Transverse colon (tissue), 4 donors: ENCODE measurements at regions of chr1 and their contacts with region 1.

Region 1: DNA sequence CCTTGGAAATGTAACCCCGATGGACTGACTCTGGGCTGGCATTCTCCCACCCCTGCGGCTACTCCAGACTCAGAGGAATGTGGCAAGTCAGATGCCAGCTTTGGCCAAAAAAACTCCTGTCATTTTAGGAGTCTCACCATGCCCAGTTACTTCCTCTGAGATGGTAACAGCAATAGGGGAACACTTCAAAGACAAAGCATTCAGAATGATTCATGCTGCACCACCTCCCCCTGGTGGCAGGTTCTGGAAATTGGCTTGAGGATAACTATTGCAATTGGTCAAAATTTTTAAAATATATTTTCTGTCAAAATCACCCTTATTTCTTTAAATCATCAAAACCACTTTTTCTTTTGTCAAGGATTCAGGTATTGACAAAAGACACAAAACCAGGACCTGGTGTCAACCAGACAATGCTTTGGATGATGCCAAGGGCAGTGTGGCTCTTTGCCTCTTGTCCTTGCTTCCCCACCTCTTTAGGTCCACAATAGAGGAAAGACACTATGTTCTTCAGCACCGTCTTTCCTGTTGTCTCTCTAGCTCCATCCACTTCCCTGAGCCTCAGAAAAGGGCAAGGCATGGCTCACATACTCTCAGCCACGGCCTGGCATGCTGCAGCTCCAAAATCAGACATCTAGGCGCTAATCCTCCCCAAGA is 9.9 kb upstream of the CDCA8 start:
- DNase-seq: peak; percentile 70
- H3K4me3 ChIP-seq: no peak overlapping the region
- H3K27ac ChIP-seq: no peak overlapping the region
- H3K4me1 ChIP-seq: peaks cover 0 to 3% (median 0%) of the 10 kb centered on the region in 4 donors
- H3K27me3 ChIP-seq: no peaks in the 10 kb centered on the region
- CTCF ChIP-seq: peak; percentile 83 to 88 (median 87)
- EP300 ChIP-seq: no peak
- POLR2A ChIP-seq: no peak

Region 2: DNA sequence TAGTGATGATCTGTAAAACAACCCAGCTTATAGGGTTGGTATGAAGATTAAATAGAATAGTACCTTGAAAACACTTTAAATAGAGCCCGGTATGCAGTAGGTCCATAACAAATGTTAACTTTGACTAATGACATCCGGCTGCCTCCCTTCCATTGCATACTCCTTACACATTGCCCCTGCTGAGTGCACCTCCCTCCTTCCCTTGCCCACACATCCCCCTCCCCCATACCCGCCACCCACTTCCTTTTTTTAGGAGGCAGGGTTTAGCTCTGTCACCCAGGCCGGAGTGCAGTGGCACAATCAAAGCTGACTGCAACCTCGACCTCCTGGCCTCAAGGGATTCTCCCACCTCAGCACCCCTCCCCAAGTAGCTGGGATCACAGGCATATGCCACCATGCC is 232.5 kb before region 1 on chr1:
- in situ Hi-C with region 1: loop called in 3 of 4 experiments (anchors 10 to 25 kb)
- intact Hi-C with region 1: loop called (anchors 5 kb)
- DNase-seq: no peak
- H3K4me3 ChIP-seq: no peak overlapping the region
- H3K27ac ChIP-seq: no peak overlapping the region
- H3K4me1 ChIP-seq: peaks cover 0 to 8% (median 0%) of the 10 kb centered on the region in 4 donors
- H3K27me3 ChIP-seq: peaks cover 24% of the 10 kb centered on the region
- CTCF ChIP-seq: no peak
- EP300 ChIP-seq: no peak
- POLR2A ChIP-seq: no peak

Region 3: DNA sequence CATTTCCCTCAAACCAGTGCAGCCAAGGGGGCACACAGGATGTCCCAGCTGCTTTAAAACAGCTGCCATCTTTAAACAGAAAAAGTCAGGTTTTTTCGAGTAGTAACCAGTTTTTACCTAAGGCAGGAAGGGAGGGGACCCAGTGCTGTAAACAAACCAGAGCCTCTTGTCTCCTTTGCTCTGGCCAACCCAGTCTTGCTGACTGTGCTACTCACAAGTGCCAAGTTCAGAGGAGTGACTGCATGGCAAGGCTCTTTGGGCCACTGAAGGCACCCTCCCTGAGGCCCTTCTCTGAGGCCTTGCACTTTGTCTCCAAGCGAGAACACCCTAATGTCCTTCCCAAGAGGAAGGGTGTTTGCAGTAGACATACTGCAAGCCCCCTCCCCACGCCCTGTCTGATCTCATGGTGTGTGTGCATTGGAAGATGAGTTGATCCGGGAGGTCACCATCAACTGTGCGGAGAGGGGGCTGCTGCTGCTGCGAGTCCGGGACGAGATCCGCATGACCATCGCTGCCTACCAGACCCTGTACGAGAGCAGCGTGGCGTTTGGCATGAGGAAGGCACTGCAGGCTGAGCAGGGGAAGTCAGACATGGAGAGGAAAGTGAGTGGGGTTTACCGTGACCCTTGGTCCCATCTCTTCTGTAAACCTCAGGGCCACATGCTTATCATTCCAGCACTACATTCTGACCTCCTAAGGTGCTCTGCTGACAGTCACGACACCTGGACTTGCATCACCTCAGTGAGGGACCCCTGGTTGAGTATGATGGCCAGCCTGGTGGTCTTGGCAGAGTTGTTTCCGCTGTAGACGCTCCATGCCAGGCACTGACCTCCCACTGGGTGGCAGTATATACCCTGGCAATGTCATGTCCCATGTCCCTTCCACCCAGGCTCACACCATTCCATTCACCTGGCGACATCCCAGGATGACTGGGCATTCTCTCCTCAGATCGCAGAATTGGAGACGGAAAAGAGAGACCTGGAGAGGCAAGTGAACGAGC is 121.0 kb before region 1 on chr1:
- in situ Hi-C with region 1: no loop called
- intact Hi-C with region 1: loop called (anchors 10 kb)
- DNase-seq: no peak
- H3K4me3 ChIP-seq: no peak overlapping the region
- H3K27ac ChIP-seq: no peak overlapping the region
- H3K4me1 ChIP-seq: peaks cover 4 to 10% (median 7%) of the 10 kb centered on the region in 4 donors
- H3K27me3 ChIP-seq: no peaks in the 10 kb centered on the region
- CTCF ChIP-seq: peak; percentile 37 to 52 (median 45)
- EP300 ChIP-seq: no peak
- POLR2A ChIP-seq: no peak

Region 4: DNA sequence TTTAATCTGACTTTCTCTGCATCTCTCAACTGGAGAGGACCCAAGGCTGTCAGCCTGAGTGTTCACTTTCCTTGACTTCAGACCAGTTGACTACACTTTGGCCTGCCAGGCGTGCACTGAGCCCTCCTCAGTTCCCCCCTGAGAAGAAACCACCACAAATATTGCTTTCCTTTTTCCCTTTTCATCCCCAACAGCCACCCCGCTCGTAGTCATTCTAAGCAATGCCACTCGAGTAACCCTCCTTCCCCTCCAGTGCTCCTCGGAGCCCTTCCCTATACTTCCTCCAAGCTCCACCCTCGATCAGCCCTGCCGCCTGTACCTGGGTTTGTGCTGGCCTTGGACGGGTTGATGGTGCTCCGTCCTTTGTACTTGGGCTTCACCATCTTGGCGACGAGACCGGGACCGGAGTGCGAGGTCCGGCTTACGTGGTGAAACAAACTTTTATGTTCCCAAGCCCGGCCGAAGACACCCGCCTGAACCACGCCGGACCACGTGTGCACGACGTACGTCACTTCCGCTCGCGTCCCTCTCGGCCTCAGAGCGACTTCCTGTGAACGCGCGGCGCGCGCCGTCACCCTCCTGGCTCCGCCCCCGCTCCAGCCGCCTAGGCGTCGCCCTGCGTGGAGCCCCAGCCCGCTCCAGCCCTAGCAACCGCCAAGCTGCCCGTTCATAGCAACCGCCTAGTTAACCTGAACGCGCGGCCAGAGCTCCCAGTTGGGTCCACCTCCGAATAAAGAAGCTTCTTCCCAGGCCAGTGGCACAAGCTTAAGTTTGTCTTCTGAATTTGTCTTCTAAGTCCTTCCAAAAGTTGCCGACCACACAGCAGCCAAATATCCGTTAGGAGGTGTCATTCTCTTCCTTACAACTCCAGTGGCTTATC is 86.8 kb before region 1 on chr1 and contains the start of gene GNL2:
- in situ Hi-C with region 1: loop called (anchors 5 to 10 kb)
- intact Hi-C with region 1: loop called (anchors 5 kb)
- DNase-seq: peak; percentile 98
- H3K4me3 ChIP-seq: peak within 1 kb of the TSS; percentile 49 to 75 (median 58)
- H3K27ac ChIP-seq: peak within 1 kb of the TSS; percentile 81 to 89 (median 85)
- H3K4me1 ChIP-seq: peaks cover 14 to 19% (median 14%) of the 10 kb centered on the region in 4 donors
- H3K27me3 ChIP-seq: no peaks in the 10 kb centered on the region
- CTCF ChIP-seq: no peak
- EP300 ChIP-seq: no peak
- POLR2A ChIP-seq: peak; percentile 82
- total RNA-seq, gene GNL2: 33.5 to 58.4 (median 43.0) TPM

Region 5: GRCh38 chr1:37602750-37603694 is 79.4 kb before region 1 on chr1:
- in situ Hi-C with region 1: loop called (anchors 5 to 10 kb)
- intact Hi-C with region 1: loop called (anchors 5 kb)
- DNase-seq: peak; percentile 28
- H3K4me3 ChIP-seq: no peak overlapping the region
- H3K27ac ChIP-seq: no peak overlapping the region
- H3K4me1 ChIP-seq: peaks cover 0 to 11% (median 0%) of the 10 kb centered on the region in 4 donors
- H3K27me3 ChIP-seq: peaks cover 5% of the 10 kb centered on the region
- CTCF ChIP-seq: peak; percentile 50 to 63 (median 59)
- EP300 ChIP-seq: no peak
- POLR2A ChIP-seq: no peak